A673 (cell line): ENCODE measurements at regions of chr3 and their contacts with region 1.

Region 1: DNA sequence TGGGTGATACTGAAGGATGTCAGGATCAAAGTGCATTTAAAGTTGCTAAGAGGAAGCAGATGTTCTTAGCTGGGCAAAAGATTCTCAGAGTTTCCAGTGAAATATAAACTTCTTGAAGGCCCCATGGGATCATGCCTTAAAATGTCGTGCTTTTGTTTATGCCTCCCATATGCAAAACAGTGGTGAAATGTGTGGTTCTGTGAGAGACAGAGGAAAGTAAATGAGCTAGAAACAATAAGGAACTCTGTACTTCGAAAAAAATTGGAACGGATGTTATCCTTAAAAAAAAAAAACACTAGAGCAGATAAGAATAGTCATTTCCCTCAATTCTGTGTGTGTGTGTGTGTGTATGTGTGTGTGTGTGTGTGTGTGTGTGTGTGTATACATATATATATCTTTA is 497.0 kb upstream of the TBL1XR1 start:
- DNase-seq: peak; percentile 74
- H3K4me3 ChIP-seq: no peak overlapping the region
- H3K27ac ChIP-seq: peak overlapping the region; percentile 21
- H3K4me1 ChIP-seq: peaks cover 20% of the 10 kb centered on the region
- H3K27me3 ChIP-seq: no peaks in the 10 kb centered on the region
- CTCF ChIP-seq: no peak

Region 2: DNA sequence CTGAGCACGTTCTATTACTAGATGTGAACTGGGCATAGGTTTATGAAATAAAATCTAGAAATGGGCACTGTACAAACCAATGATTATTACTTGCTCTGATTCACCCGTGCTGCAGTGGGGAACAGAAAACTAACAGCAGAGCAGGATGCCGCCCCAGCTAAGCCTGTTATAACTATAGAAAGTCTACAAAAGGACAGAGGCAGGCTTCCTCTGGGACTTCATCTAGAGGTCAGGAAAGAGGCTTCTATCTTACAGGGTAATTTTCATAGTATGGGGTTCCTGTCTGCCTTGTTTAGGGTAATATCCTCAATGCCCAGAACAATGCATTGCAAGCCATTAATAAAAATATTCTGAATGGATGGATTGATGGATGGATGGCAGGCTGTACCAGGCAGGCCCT is 320.0 kb before region 1 on chr3:
- CTCF ChIA-PET with region 1: interaction called, 11 read pairs
- POLR2A ChIA-PET with region 1: no interaction called
- intact Hi-C with region 1: no loop called
- DNase-seq: peak; percentile 87
- H3K4me3 ChIP-seq: no peak overlapping the region
- H3K27ac ChIP-seq: peak overlapping the region; percentile 29
- H3K4me1 ChIP-seq: peaks cover 20% of the 10 kb centered on the region
- H3K27me3 ChIP-seq: no peaks in the 10 kb centered on the region
- CTCF ChIP-seq: no peak

Region 3: GRCh38 chr3:178436773-178437172 is 742.5 kb after region 1 on chr3:
- CTCF ChIA-PET with region 1: no interaction called
- POLR2A ChIA-PET with region 1: no interaction called
- intact Hi-C with region 1: no loop called
- DNase-seq: peak; percentile 65
- H3K4me3 ChIP-seq: no peak overlapping the region
- H3K27ac ChIP-seq: no peak overlapping the region
- H3K4me1 ChIP-seq: peaks cover 24% of the 10 kb centered on the region
- H3K27me3 ChIP-seq: no peaks in the 10 kb centered on the region
- CTCF ChIP-seq: peak; percentile 77